ENCODE measurements at regions of chr3 and their contacts with region 1.

Region 1: GRCh38 chr3:38117748-38118420 is 19.0 kb downstream of the ACAA1 start:
- DNase-seq: peak; percentile 85
- H3K4me3 Mint-ChIP-seq: no peak overlapping the region
- H3K27ac Mint-ChIP-seq: no peak overlapping the region
- H3K4me1 Mint-ChIP-seq: no peaks in the 10 kb centered on the region
- H3K27me3 Mint-ChIP-seq: no peaks in the 10 kb centered on the region

Region 2: DNA sequence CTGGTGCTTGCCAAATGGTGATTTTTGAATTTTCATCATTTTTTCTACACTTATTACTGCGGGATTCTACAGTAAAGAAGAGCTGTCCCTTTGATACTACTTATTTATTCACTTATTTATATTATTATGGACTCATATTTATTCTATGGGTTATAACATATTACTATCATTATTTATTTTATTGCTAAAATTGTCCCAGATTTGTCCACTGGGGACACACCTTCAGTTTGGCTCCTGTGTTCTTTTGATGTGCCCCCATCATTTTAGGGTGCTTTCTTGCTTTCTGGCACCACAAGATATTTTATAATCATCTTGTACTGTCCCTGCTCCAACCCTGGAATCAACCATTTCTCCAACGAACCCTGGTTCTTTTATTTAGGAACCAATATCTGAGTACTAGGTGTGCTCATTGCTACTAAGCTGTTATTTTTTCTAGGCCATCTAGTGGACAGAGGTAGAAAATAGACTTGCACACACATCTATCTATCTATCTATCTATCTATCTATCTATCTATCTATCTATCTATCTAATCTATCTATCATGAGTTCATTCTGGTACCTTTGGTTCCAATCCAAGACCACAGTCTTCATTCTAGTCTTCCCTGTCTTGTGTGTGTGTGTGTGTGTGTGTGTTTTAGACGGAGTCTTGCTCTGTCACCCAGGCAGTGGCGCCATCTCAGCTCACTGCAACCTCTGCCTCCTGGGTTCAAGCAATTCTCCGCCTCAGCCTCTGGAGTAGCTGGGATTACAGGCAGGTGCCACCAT is 180.2 kb after region 1 on chr3:
- CTCF ChIA-PET with region 1: interaction called, 14 read pairs
- POLR2A ChIA-PET with region 1: no interaction called
- intact Hi-C with region 1: no loop called
- DNase-seq: no peak
- H3K4me3 Mint-ChIP-seq: no peak overlapping the region
- H3K27ac Mint-ChIP-seq: no peak overlapping the region
- H3K4me1 Mint-ChIP-seq: no peaks in the 10 kb centered on the region
- H3K27me3 Mint-ChIP-seq: peaks cover 4% of the 10 kb centered on the region

Measured in activated CD4-positive, alpha-beta memory T cell treated with anti-CD3 and anti-CD28 coated beads for 36 hours (primary cell).